ENCODE measurements at regions of chr1 and their contacts with region 1.

Region 1: GRCh38 chr1:15684468-15685291 is 560 bp downstream of the PLEKHM2 start:
- DNase-seq: peak; percentile 16
- H3K4me3 ChIP-seq: peak overlapping the region; percentile 75 to 92 (median 89)
- H3K27ac ChIP-seq: peak overlapping the region; percentile 43
- H3K4me1 ChIP-seq: peaks cover 37% of the 10 kb centered on the region
- H3K27me3 ChIP-seq: no peaks in the 10 kb centered on the region
- CTCF ChIP-seq: no peak

Region 2: GRCh38 chr1:15603050-15603965 is 81.4 kb before region 1 on chr1:
- CTCF ChIA-PET with region 1: no interaction called
- dilution Hi-C with region 1: no loop called
- in situ Hi-C with region 1: no loop called
- intact Hi-C with region 1: no loop called
- DNase-seq: peak; percentile 97
- H3K4me3 ChIP-seq: peak overlapping the region; percentile 50 to 72 (median 64)
- H3K27ac ChIP-seq: peak overlapping the region; percentile 89
- H3K4me1 ChIP-seq: peaks cover 5% of the 10 kb centered on the region
- H3K27me3 ChIP-seq: no peaks in the 10 kb centered on the region
- CTCF ChIP-seq: no peak

Region 3: GRCh38 chr1:15617175-15617880 is 67.4 kb before region 1 on chr1 and contains the start of gene DDI2:
- CTCF ChIA-PET with region 1: no interaction called
- dilution Hi-C with region 1: no loop called
- in situ Hi-C with region 1: no loop called
- intact Hi-C with region 1: loop called (anchors 1 kb)
- DNase-seq: peak; percentile 98
- H3K4me3 ChIP-seq: peak within 1 kb of the TSS; percentile 81 to 99 (median 96)
- H3K27ac ChIP-seq: peak within 1 kb of the TSS; percentile 81
- H3K4me1 ChIP-seq: peaks cover 29% of the 10 kb centered on the region
- H3K27me3 ChIP-seq: no peaks in the 10 kb centered on the region
- CTCF ChIP-seq: no peak
- total RNA-seq, gene DDI2: 22.2 to 29.7 TPM

Region 4: DNA sequence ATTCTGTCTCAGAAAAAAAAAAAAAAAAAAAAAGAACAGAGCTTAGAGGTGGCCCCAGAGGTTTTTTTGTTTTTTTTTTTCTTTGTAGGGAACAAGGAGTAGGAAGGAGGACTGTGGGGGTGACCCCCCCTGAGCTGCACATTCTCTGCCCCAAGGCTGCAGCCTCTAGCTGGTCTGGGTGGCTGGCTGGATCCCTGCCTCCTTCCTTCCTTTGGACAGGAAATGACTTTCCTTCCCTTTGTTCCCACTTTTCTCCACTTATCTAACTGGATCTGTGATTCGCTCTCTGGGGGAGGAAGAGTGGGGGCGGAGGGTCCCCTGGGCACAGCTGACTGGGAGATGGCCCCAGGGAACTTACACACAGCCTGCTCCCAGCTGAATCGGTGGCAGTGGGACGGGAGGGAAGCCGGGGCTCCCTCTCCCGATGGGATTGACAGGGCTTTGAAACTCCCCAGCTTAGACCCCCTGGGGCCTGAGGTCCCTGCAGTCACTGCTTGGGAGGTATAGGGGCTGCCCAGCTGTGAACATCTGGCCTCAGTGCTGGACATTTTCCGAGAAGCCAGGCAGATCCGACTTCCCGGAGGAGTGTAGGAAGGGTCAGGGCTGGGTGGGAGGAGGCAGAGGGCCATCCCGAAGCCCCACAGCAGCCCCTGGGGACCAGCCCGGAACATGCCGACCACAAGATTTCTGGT is 76.0 kb after region 1 on chr1:
- CTCF ChIA-PET with region 1: no interaction called
- dilution Hi-C with region 1: no loop called
- in situ Hi-C with region 1: no loop called
- intact Hi-C with region 1: loop called (anchors 5 kb)
- DNase-seq: peak; percentile 60
- H3K4me3 ChIP-seq: peak overlapping the region; percentile 28 to 50 (median 42)
- H3K27ac ChIP-seq: peak overlapping the region; percentile 32
- H3K4me1 ChIP-seq: peaks cover 47% of the 10 kb centered on the region
- H3K27me3 ChIP-seq: no peaks in the 10 kb centered on the region
- CTCF ChIP-seq: no peak